MCF 10A (cell line): ENCODE measurements at regions of chr12 and their contacts with region 1.

Region 1: GRCh38 chr12:90959538-90960139 is 4.7 kb upstream of the CCER1 start:
- DNase-seq: peak; percentile 62
- H3K4me3 Mint-ChIP-seq: no peak overlapping the region
- H3K27ac Mint-ChIP-seq: no peak overlapping the region
- H3K4me1 Mint-ChIP-seq: no peaks in the 10 kb centered on the region
- H3K27me3 Mint-ChIP-seq: no peaks in the 10 kb centered on the region
- CTCF ChIP-seq: peak; percentile 48

Region 2: DNA sequence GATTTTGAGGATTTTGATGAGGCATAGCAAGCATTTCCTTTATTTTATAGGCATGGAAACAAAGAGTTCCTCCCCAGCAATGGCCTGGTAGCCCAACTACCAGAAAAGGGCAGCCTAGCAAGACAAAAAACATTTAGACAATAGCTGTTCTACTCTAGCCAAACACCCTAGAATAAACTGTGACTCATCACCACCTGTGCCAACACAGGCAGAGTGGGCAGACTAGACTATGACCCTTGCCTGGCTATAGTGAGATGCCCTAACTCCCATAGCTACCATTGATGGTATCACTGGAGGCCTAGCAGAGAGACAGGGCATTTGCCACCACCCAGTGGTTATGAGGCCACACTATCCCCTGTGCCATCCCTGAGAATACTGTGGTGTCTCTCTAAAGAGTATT is 10.8 kb after region 1 on chr12:
- CTCF ChIA-PET with region 1: interaction called, 11 read pairs
- POLR2A ChIA-PET with region 1: no interaction called
- intact Hi-C with region 1: no loop called
- DNase-seq: peak; percentile 34
- H3K4me3 Mint-ChIP-seq: no peak overlapping the region
- H3K27ac Mint-ChIP-seq: no peak overlapping the region
- H3K4me1 Mint-ChIP-seq: no peaks in the 10 kb centered on the region
- H3K27me3 Mint-ChIP-seq: peaks cover 15% of the 10 kb centered on the region
- CTCF ChIP-seq: no peak